ENCODE measurements at regions of chr12 and their contacts with region 1.

Region 1: GRCh38 chr12:121443193-121443870 is 43.4 kb downstream of the RNF34 start:
- DNase-seq: peak; percentile 97
- H3K4me3 ChIP-seq: no peak overlapping the region; a peak in 1 of 4 replicates
- H3K27ac ChIP-seq: no peak overlapping the region
- H3K4me1 ChIP-seq: peaks cover 0 to 2% of the 10 kb centered on the region in 2 experiments; a peak in 1 of 4 replicates
- H3K27me3 ChIP-seq: no peaks in the 10 kb centered on the region
- CTCF ChIP-seq: peak; percentile 88
- EP300 ChIP-seq: no peak
- RAD21 ChIP-seq: peak; percentile 92

Region 2: GRCh38 chr12:120972870-120973407 is 470.4 kb before region 1 on chr12:
- CTCF ChIA-PET with region 1: no interaction called
- POLR2A ChIA-PET with region 1: no interaction called
- DNase-seq: no peak
- H3K4me3 ChIP-seq: no peak overlapping the region
- H3K27ac ChIP-seq: no peak overlapping the region
- H3K4me1 ChIP-seq: peaks cover 0 to 2% of the 10 kb centered on the region in 2 experiments; a peak in 1 of 4 replicates
- H3K27me3 ChIP-seq: no peaks in the 10 kb centered on the region
- CTCF ChIP-seq: no peak
- EP300 ChIP-seq: no peak
- RAD21 ChIP-seq: no peak

Region 3: DNA sequence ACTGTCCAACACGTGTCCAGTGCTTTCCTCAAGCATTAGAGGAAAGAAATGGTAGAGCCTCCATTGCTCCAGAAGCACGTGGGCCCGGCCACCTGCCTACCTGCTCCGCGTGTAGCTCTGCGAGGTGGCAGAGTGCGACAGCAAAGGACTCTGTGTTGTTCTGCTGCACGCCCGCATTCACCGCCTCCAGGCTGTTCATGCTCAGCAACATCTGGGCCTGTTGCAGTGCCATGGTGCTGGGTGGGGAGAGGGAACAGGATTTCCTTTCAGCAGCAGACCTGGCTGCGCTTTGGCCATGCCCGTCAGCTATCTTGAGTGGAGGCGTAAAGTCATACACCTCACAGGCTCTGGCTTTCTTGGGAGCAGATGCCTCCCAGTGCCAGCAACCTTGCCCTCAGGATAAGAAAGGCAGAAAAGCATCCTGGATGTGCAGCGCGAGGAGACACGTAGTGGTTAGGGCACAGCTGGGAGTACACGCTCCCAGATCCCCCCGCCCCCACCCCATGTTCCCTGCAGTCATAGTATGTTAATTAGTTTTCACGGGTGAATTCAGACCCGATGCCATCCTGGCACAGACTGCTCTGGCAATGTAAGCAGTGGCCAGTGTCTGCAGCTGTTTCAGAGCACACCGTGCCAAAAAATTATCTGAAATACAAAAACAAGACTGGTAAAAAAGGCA is 116.2 kb before region 1 on chr12:
- CTCF ChIA-PET with region 1: interaction called, 192 read pairs
- POLR2A ChIA-PET with region 1: no interaction called
- DNase-seq: peak; percentile 79
- H3K4me3 ChIP-seq: no peak overlapping the region; a peak in 1 of 4 replicates
- H3K27ac ChIP-seq: peak overlapping the region in 1 of 2 experiments; percentile 83; a peak in 2 of 4 replicates
- H3K4me1 ChIP-seq: peaks cover 0 to 24% of the 10 kb centered on the region in 2 experiments; a peak in 2 of 4 replicates
- H3K27me3 ChIP-seq: no peaks in the 10 kb centered on the region
- CTCF ChIP-seq: no peak
- EP300 ChIP-seq: 0 out of 4 replicates have a peak, but pooled peaks of 1 of the 2 experiments have one; percentile 54
- RAD21 ChIP-seq: no peak

Region 4: DNA sequence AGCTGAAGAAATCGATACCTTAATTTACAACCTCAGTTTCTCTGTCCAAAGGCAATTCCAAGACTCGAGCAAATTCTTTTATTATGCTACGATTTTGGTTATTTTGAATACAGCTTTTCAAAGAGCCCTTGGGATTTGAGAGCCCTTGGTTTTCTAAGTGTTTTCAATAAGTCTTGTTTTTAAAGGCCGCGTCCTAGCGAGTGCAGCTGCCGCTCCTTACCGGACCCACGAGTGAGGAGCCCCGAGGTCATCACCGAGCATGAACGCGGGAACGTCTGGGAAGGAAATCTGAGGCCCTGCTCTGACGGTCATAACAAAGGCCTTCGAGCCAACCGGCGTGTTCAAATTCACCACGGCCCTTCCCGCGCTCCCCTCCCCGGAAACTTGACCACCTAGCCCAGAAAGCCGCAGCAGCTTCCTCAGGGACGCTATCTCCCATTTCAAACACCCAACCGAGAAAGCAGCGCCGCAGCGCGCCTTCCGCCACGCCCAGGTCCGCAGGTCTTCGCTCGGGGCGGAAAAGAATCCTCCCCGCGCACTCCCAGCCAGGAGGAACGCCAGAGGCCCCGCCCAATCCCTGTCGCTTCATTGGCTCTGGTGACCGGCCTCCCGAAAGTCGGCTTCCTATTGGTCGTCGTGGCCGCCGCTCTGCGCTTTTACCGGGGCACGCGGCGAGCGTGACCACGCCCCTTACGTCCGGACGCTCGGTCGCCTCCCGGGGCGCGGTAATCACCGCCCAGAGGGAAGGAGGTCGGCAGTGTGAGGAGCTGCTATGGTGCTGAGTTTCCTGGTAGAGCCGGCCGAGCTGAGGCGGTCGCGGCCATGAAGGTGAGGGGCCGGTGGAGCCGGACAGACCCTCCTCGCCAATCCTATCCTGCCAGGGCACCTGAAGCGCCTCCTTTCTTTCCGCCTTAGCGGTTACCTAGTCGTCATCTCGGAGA is 43.7 kb before region 1 on chr12 and contains the start of gene RNF34:
- CTCF ChIA-PET with region 1: interaction called, 15 read pairs
- POLR2A ChIA-PET with region 1: no interaction called
- DNase-seq: peak; percentile 96
- H3K4me3 ChIP-seq: peak within 1 kb of the TSS; percentile 77 to 81
- H3K27ac ChIP-seq: peak within 1 kb of the TSS; percentile 73 to 84
- H3K4me1 ChIP-seq: peaks cover 4 to 8% of the 10 kb centered on the region in 2 experiments; a peak in 3 of 4 replicates
- H3K27me3 ChIP-seq: no peaks in the 10 kb centered on the region
- CTCF ChIP-seq: no peak
- EP300 ChIP-seq: no peak
- RAD21 ChIP-seq: peak; percentile 1; the same call in 1 of the 2 replicates
- polyA plus RNA-seq, gene RNF34: 28.7 and 29.4 TPM in 2 replicates

Region 5: DNA sequence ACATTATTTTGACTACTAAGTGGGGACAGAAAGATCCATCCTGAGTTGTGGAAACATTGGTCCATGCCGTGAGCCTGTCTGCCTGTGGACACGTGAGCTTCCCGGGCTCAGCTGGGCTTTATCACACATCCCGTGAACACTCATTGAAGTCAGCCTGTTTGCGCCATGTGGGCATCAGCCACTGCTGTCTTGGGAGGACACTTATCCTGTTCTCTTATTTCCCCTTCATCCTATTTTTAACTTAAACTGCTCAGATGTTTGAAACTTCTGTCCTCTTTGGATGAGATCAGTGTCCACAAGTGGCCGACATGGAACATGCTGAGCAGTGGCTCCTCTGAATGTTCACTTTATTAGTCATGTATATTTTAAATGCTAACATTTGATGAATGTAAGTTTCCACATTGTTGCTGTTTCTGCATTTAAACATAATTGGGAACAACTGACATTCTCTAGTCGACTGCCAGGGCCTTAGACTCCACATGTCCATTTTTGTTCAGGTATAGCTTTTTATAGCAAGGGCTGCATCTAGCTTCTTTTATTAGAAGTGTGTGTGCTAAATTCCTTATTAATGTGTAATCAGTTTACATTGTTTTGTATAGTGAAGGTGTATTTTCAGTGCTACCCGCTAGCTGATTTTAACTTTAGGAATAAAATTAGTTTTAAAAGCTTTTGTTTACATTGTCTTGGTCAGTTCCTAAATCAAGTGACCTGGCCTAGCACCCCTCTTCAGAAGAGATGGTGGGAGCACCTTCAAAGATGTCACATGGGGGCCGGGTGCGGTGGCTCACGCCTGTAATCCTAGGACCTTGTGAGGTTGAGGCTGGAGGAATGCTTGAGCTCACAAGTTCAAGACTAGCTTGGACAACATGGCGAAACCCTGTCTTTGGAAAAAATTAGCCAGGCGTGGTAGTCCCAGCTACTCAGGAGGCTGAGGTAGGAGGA is 19.4 kb before region 1 on chr12:
- CTCF ChIA-PET with region 1: interaction called, 40 read pairs
- POLR2A ChIA-PET with region 1: no interaction called
- DNase-seq: no peak
- H3K4me3 ChIP-seq: no peak overlapping the region
- H3K27ac ChIP-seq: no peak overlapping the region
- H3K4me1 ChIP-seq: 0 out of 4 replicates have a peak, but pooled peaks cover 0 to 3% of the 10 kb centered on the region in 2 experiments
- H3K27me3 ChIP-seq: no peaks in the 10 kb centered on the region
- CTCF ChIP-seq: no peak
- EP300 ChIP-seq: no peak
- RAD21 ChIP-seq: no peak

Region 6: DNA sequence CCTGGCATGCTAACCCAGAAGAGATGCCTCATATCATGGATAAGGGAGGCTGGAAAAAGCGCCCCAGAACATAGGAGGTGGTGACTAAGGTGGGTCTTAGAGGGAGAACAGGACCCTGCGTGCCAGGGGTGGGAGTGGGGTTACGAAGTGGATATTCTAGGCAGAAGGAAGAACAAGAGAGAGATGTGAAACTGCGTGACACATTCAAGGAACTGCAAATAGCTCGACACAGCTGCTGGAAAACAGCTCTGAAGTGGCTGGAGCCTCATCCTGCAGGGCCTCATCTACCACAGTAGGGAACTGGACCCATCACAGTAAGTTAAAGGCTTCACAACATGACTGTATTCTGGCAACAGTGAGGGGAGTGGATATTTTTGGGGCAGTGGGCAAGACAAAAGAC is 17.7 kb after region 1 on chr12:
- CTCF ChIA-PET with region 1: interaction called, 46 read pairs
- POLR2A ChIA-PET with region 1: no interaction called
- DNase-seq: no peak
- H3K4me3 ChIP-seq: no peak overlapping the region
- H3K27ac ChIP-seq: no peak overlapping the region
- H3K4me1 ChIP-seq: peaks cover 0 to 5% of the 10 kb centered on the region in 2 experiments; a peak in 1 of 4 replicates
- H3K27me3 ChIP-seq: no peaks in the 10 kb centered on the region
- CTCF ChIP-seq: no peak
- EP300 ChIP-seq: no peak
- RAD21 ChIP-seq: no peak